Naive thymus-derived CD4-positive, alpha-beta T cell (primary cell): ENCODE measurements at regions of chr16 and their contacts with region 1.

Region 1: DNA sequence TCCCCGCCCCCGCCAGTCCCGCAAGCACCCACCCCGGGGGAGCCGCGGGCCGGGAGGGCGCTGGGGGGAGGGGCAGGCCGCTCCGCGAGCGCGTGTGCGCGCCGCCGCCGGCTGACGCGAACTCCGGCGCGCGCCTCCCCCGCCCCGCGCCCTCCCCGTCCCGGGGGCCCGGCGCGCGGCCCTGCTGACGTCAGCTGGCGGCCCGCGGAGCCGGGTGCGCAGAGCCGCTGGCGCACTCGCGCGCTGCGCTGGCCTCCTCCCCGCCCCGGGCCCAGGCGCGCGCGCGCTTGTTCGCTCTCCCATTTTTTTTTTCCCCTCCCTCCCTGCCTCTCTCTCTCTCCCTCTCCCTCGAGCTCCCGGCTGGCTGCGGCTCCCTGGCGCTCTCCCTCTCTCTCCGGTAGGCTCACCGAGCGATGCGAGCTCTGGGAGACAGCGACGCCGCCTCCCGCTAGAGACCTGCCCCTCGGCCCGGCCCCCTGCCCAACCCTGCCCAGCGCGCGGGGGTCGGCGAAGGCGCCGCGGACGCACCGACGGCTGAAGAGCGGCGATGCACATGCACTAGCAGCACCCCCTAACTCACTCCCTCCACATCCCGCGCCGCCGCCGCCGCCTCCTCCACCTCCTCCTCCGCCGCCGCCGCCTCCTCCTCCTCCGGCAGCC is at the start of gene GNAO1:
- DNase-seq: peak in 5 of 9 donors; percentile 18 to 73 (median 43)
- ATAC-seq: peak; percentile 81
- H3K4me3 ChIP-seq: peak within 1 kb of the TSS; percentile 52
- H3K4me3 Mint-ChIP-seq: peak within 1 kb of the TSS; percentile 67 to 82 (median 80)
- H3K27ac ChIP-seq: no peak within 1 kb of the TSS
- H3K27ac Mint-ChIP-seq: peak within 1 kb of the TSS in 1 of 9 donors; percentile 70
- H3K4me1 ChIP-seq: peaks cover 12 to 17% of the 10 kb centered on the region in 2 donors
- H3K4me1 Mint-ChIP-seq: peaks cover 16 to 32% (median 25%) of the 10 kb centered on the region in 7 donors
- H3K27me3 ChIP-seq: peaks cover 0 to 13% of the 10 kb centered on the region in 2 donors
- H3K27me3 Mint-ChIP-seq: peaks cover 41 to 90% (median 43%) of the 10 kb centered on the region in 5 donors
- total RNA-seq, gene GNAO1: 0.43 to 5.4 (median 2.8) TPM in 4 of 5 experiments, not detected in the other

Region 2: GRCh38 chr16:54286090-54286993 is 1904.9 kb before region 1 on chr16 and contains the start of gene IRX3:
- CTCF ChIA-PET with region 1: no interaction called
- POLR2A ChIA-PET with region 1: no interaction called
- intact Hi-C with region 1: loop called in 1 of 2 experiments (anchors 10 kb)
- DNase-seq: peak in 1 of 9 donors; percentile 41
- ATAC-seq: no peak
- H3K4me3 ChIP-seq: no peak within 1 kb of the TSS
- H3K4me3 Mint-ChIP-seq: peak within 1 kb of the TSS; percentile 38 to 90 (median 75)
- H3K27ac ChIP-seq: no peak within 1 kb of the TSS
- H3K27ac Mint-ChIP-seq: peak within 1 kb of the TSS in 1 of 9 donors; percentile 71
- H3K4me1 ChIP-seq: no peaks in the 10 kb centered on the region
- H3K4me1 Mint-ChIP-seq: peaks cover 19 to 53% (median 34%) of the 10 kb centered on the region in 7 donors
- H3K27me3 ChIP-seq: no peaks in the 10 kb centered on the region
- H3K27me3 Mint-ChIP-seq: peaks cover 47 to 78% (median 67%) of the 10 kb centered on the region in 5 donors
- total RNA-seq, gene IRX3: 3.2 TPM in 1 of 5 experiments, not detected in the others

Region 3: GRCh38 chr16:56151621-56152020 is 39.7 kb before region 1 on chr16:
- CTCF ChIA-PET with region 1: no interaction called
- POLR2A ChIA-PET with region 1: no interaction called
- intact Hi-C with region 1: no loop called
- DNase-seq: no peak
- ATAC-seq: no peak
- H3K4me3 ChIP-seq: no peak overlapping the region
- H3K4me3 Mint-ChIP-seq: no peak overlapping the region
- H3K27ac ChIP-seq: no peak overlapping the region
- H3K27ac Mint-ChIP-seq: no peak overlapping the region
- H3K4me1 ChIP-seq: no peaks in the 10 kb centered on the region
- H3K4me1 Mint-ChIP-seq: peaks cover 0 to 1% (median 0%) of the 10 kb centered on the region in 7 donors
- H3K27me3 ChIP-seq: no peaks in the 10 kb centered on the region
- H3K27me3 Mint-ChIP-seq: peaks cover 15 to 55% (median 40%) of the 10 kb centered on the region in 5 donors

Region 4: GRCh38 chr16:56203052-56203451 is 11.8 kb after region 1 on chr16:
- CTCF ChIA-PET with region 1: no interaction called
- POLR2A ChIA-PET with region 1: no interaction called
- intact Hi-C with region 1: loop called in 1 of 2 experiments (anchors 1 kb)
- DNase-seq: peak in 2 of 9 donors; percentile 39 to 41
- ATAC-seq: peak; percentile 90
- H3K4me3 ChIP-seq: no peak overlapping the region
- H3K4me3 Mint-ChIP-seq: no peak overlapping the region
- H3K27ac ChIP-seq: no peak overlapping the region
- H3K27ac Mint-ChIP-seq: no peak overlapping the region
- H3K4me1 ChIP-seq: peaks cover 30 to 54% of the 10 kb centered on the region in 2 donors
- H3K4me1 Mint-ChIP-seq: peaks cover 0 to 19% (median 14%) of the 10 kb centered on the region in 7 donors
- H3K27me3 ChIP-seq: no peaks in the 10 kb centered on the region
- H3K27me3 Mint-ChIP-seq: peaks cover 0 to 26% (median 0%) of the 10 kb centered on the region in 5 donors

Region 5: DNA sequence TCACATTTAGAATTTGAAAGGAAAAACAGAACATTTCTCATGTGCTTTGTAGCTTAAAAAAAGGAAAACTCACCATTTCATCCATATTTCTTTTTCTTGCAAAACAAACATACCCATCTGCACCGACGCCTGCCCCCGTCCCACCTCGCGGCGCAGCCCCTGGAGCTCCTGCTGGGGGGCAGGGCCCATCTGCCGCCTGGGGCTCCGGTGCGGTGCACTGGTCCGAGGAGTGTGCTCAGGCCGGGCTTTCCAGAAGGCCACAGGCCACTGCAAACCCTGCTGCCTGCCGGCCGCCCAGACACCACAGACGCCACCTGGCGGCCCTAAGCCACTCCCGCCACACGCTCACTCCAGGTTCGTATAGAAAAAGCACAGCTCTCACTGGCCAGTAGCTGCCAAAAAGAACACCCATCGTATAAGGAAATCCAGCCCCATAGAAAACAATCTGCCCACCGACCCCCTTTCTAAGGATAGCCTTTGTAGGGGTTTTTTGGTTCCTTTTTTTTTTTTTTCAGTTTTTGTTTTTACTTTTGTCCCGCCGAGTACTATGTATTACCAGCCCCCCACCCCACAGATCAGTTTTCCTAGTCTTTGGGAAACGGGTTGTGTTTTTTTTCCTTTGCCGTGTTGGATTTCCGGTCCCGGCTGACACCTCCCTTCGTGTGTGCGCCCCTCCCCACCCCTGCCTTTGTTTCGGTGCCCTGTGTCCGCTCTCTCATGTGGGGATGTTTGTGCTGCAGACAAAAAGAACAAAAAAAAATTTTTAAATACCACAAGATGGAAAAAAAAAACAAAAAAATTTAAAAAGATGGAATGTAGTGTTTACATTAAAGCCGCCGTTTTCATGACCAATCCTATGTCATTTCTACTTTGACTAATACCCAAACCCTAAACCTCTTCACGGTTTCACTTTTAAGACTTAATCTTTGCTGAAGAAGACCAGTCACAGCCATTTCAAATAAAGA is 165.3 kb after region 1 on chr16:
- CTCF ChIA-PET with region 1: no interaction called
- POLR2A ChIA-PET with region 1: no interaction called
- intact Hi-C with region 1: loop called in 1 of 2 experiments (anchors 2 kb)
- DNase-seq: peak; percentile 26 to 62 (median 43)
- ATAC-seq: peak; percentile 87
- H3K4me3 ChIP-seq: peak overlapping the region; percentile 63
- H3K4me3 Mint-ChIP-seq: peak overlapping the region; percentile 82 to 93 (median 90)
- H3K27ac ChIP-seq: peak overlapping the region; percentile 60
- H3K27ac Mint-ChIP-seq: peak overlapping the region; percentile 71 to 95 (median 91)
- H3K4me1 ChIP-seq: peaks cover 0 to 11% of the 10 kb centered on the region in 2 donors
- H3K4me1 Mint-ChIP-seq: peaks cover 4 to 41% (median 38%) of the 10 kb centered on the region in 7 donors
- H3K27me3 ChIP-seq: no peaks in the 10 kb centered on the region
- H3K27me3 Mint-ChIP-seq: no peaks in the 10 kb centered on the region

Region 6: DNA sequence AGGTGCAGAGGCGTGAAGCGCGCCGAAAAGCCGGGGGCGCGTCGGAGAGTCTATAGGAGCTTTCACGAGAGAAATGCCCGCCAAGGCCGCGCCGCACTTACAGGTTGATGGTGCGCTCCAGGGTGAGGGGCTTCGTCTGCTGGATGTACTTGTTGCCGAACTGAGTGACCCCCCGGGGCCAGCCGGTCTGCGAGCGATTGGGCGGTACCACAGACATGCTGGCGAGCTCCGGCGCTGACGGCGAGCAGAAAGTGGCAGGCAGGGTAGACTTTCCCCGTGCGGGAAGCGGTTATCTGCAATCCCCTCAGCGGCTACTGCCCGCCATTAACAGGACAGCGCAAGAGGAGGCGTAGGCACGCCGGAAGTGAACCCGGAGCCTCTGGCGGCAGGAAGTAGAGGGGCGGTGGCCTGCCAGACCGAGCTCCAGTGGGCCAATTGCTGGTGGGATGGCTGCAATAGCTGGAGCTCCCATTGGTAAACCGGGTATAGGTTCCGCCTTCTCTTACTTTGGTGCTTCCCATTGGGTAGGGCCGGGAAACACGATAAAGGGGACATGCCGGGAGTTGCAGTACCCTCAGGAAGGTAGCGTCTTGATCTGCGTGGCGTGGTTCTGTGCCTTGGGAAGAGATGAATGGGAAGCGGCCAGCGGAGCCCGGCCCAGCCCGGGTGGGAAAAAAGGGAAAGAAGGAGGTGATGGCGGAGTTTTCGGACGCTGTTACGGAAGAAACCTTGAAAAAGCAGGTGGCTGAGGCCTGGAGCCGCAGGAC is 259.9 kb after region 1 on chr16 and contains the starts of genes NUDT21 and OGFOD1:
- CTCF ChIA-PET with region 1: no interaction called
- POLR2A ChIA-PET with region 1: no interaction called
- intact Hi-C with region 1: loop called in 1 of 2 experiments (anchors 2 kb)
- DNase-seq: peak; percentile 67 to 96 (median 93)
- ATAC-seq: peak; percentile 99
- H3K4me3 ChIP-seq: peak within 1 kb of the TSS; percentile 96
- H3K4me3 Mint-ChIP-seq: peak within 1 kb of the TSS; percentile 94 to 100 (median 97)
- H3K27ac ChIP-seq: peak within 1 kb of the TSS; percentile 92
- H3K27ac Mint-ChIP-seq: peak within 1 kb of the TSS; percentile 92 to 98 (median 93)
- H3K4me1 ChIP-seq: peaks cover 24 to 42% of the 10 kb centered on the region in 2 donors
- H3K4me1 Mint-ChIP-seq: peaks cover 50 to 77% (median 64%) of the 10 kb centered on the region in 7 donors
- H3K27me3 ChIP-seq: no peaks in the 10 kb centered on the region
- H3K27me3 Mint-ChIP-seq: no peaks in the 10 kb centered on the region
- total RNA-seq, gene NUDT21: 74.0 to 191 (median 97.5) TPM
- total RNA-seq, gene OGFOD1: 23.8 to 51.8 (median 42.1) TPM